MCF 10A (cell line): ENCODE measurements at regions of chr12 and their contacts with region 1.

Region 1: DNA sequence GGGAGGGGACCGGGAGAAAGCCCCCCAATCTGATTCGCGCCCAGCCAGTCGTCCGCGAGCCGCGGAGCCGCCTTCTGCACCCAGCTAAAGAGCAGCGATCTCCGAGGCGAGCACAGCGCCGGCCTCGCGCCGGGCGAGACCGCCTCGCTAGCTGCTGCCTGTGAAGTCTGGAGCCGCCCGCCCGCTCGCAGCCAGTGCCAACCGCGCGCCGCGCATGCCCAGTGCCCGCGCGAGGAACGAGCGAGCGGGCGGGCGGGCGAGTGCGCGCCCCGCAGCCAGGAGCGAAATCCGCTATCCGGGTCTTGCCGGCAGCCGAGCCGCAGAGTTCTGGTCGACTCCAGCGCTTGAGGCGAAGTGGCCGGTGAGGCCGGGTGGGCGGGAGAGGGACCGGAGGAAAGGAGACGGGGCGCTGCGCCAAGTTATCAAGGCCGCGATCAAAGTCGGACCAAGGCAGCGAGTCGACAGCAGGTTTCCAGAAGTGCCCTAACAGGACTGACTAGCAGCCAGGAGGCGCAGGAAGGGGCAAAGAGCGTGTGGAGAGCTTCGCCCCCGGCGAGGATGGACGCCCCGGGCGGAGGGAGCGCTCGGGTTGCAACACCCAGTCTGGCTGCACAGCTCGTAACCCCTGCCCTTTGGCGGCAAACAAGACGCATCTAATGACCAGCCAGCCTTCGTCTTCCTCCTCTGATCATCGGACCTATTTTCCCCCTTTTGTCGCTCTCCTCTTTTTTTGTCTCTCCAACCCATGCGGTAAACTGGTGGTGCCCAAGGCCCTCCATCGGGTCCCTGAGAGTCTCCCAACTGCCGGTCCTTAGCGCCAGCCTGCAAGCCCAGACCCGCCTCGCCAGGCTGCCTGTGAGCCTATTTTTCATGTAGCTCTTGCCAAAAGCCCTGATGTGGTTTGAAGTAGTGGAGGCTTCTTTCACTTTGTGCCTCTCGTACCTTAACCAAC is at the start of gene EPS8:
- DNase-seq: peak; percentile 88
- H3K4me3 Mint-ChIP-seq: peak within 1 kb of the TSS; percentile 85
- H3K27ac Mint-ChIP-seq: peak within 1 kb of the TSS; percentile 91
- H3K4me1 Mint-ChIP-seq: peaks cover 28% of the 10 kb centered on the region
- H3K27me3 Mint-ChIP-seq: no peaks in the 10 kb centered on the region
- CTCF ChIP-seq: no peak
- total RNA-seq, gene EPS8: 85.3 and 96.2 TPM in 2 replicates

Region 2: GRCh38 chr12:14635776-14636175 is 1153.7 kb before region 1 on chr12:
- CTCF ChIA-PET with region 1: no interaction called
- POLR2A ChIA-PET with region 1: no interaction called
- intact Hi-C with region 1: no loop called
- DNase-seq: no peak
- H3K4me3 Mint-ChIP-seq: no peak overlapping the region
- H3K27ac Mint-ChIP-seq: no peak overlapping the region
- H3K4me1 Mint-ChIP-seq: no peaks in the 10 kb centered on the region
- H3K27me3 Mint-ChIP-seq: no peaks in the 10 kb centered on the region
- CTCF ChIP-seq: no peak

Region 3: GRCh38 chr12:15629108-15629507 is 160.4 kb before region 1 on chr12:
- CTCF ChIA-PET with region 1: no interaction called
- POLR2A ChIA-PET with region 1: interaction called, 12 read pairs
- intact Hi-C with region 1: no loop called
- DNase-seq: peak; percentile 87
- H3K4me3 Mint-ChIP-seq: peak overlapping the region; percentile 48
- H3K27ac Mint-ChIP-seq: peak overlapping the region; percentile 97
- H3K4me1 Mint-ChIP-seq: peaks cover 48% of the 10 kb centered on the region
- H3K27me3 Mint-ChIP-seq: no peaks in the 10 kb centered on the region
- CTCF ChIP-seq: no peak

Region 4: GRCh38 chr12:15772405-15773018 is 17.0 kb before region 1 on chr12:
- CTCF ChIA-PET with region 1: interaction called, 15 read pairs
- POLR2A ChIA-PET with region 1: interaction called, 72 read pairs
- intact Hi-C with region 1: no loop called
- DNase-seq: peak; percentile 55
- H3K4me3 Mint-ChIP-seq: no peak overlapping the region
- H3K27ac Mint-ChIP-seq: no peak overlapping the region
- H3K4me1 Mint-ChIP-seq: peaks cover 44% of the 10 kb centered on the region
- H3K27me3 Mint-ChIP-seq: no peaks in the 10 kb centered on the region
- CTCF ChIP-seq: peak; percentile 42

Region 5: DNA sequence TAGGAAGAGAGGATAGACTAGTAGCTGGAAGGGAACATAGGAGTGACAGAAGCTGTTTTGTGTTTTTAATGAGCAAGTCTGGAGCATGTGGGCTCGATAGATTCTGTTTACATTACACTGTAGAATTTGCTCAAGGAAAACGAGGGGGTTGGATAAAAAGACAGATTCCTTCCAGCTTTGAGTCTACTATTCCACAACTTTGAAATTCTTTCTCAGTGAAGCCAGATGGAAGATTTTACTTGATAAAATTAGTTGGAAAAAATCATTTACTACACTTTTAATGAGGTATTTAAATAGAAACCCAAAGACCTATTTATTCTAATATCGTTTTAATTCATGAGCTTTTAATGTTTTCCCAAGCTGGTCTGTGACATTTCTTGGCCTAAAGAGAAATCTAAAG is 19.2 kb after region 1 on chr12:
- CTCF ChIA-PET with region 1: interaction called, 5 read pairs
- POLR2A ChIA-PET with region 1: interaction called, 12 read pairs
- intact Hi-C with region 1: no loop called
- DNase-seq: no peak
- H3K4me3 Mint-ChIP-seq: no peak overlapping the region
- H3K27ac Mint-ChIP-seq: no peak overlapping the region
- H3K4me1 Mint-ChIP-seq: no peaks in the 10 kb centered on the region
- H3K27me3 Mint-ChIP-seq: no peaks in the 10 kb centered on the region
- CTCF ChIP-seq: no peak

Region 6: GRCh38 chr12:15856097-15856982 is 66.8 kb after region 1 on chr12:
- CTCF ChIA-PET with region 1: interaction called, 6 read pairs
- POLR2A ChIA-PET with region 1: interaction called, 34 read pairs
- intact Hi-C with region 1: loop called (anchors 1 kb)
- DNase-seq: peak; percentile 76
- H3K4me3 Mint-ChIP-seq: no peak overlapping the region
- H3K27ac Mint-ChIP-seq: peak overlapping the region; percentile 75
- H3K4me1 Mint-ChIP-seq: peaks cover 26% of the 10 kb centered on the region
- H3K27me3 Mint-ChIP-seq: no peaks in the 10 kb centered on the region
- CTCF ChIP-seq: peak; percentile 82